Cardiac septum (tissue), 1 donor: ENCODE measurements at regions of chr2 and their contacts with region 1.

Region 1: DNA sequence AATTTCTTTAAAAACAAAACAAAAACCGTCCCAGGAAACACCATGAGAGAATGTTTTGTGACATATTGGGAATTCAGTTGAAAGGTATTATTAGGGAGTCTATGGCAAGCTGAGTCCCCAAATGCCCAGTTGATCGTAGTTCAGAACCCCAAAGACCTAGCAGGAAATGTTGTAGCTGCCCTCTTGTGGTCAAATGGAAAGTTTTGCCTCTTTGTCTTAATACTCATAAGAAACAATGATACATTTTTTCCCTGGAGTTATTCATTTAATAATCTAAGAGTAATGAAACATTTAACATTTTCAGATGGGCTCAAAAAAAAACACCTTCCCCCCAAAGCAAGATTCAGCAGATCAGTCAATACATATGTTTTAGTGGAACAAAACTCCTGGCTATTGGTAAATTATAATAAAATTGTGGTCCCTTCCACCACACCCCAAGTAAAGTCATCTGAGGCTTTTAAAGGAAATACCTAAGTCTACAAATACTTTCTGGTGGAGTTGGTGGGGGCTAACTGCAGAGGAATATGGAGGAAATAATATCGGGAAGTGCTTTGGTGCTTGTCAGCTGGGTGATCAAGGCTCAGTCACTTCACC is 37.8 kb upstream of the EFEMP1 start:
- DNase-seq: no peak

Region 2: DNA sequence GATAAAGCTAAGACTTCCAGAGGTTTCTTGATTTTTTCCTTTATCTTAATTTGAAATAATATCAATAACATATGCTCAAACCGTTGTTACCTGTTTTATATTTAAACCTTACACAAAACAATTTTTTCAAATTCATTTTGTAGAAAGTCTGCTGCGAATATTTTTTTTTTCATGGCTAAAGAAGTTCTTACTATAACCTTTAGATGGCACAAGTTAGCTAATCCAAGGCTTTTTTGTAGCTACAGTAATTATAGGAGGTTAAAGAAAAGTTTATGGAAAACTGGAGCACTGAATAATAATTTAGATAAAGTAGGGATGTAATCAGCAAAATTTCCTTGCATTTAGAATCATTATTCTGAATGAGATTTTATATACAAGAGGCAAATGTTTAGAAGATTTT is 189.8 kb before region 1 on chr2:
- intact Hi-C with region 1: loop called (anchors 5 kb)
- DNase-seq: no peak

Region 3: GRCh38 chr2:56053679-56054078 is 92.3 kb after region 1 on chr2:
- intact Hi-C with region 1: no loop called
- DNase-seq: no peak